Activated CD4-positive, alpha-beta T cell treated with anti-CD3 and anti-CD28 coated beads for 36 hours (primary cell): ENCODE measurements at regions of chr6 and their contacts with region 1.

Region 1: DNA sequence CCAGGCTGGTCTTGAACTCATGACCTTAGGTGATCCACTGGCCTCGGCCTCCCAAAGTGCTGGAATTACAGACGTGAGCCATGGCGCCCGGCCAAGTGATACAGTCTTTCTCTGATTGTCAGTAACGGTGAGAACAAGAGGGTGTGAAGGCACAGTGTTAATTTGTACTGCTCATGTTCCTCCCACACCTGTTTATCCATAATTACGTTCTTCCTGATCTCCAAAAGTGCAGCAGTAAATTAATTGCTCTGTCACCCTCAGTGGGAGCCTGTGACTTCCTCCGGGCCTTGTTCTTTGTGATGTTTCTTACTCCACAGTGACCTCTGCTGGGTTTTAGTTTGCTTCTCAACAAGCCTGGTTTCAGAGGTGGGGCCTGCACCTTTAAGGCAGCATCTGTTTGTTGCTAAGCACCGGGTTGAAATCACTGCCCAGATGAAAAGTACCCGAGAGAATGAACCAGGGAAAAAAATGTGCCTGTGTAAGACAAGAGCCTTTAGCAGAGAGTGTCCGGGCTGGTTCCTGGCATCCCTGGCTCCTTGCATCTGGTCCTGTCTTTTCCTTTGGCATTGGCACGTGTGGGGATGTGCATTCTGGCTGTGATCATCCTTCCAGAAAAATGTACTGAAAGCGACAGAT is 89.1 kb upstream of the CLDN20 start:
- DNase-seq: peak; percentile 77
- ATAC-seq: peak; percentile 58
- H3K4me3 Mint-ChIP-seq: no peak overlapping the region
- H3K27ac Mint-ChIP-seq: peak overlapping the region; percentile 73
- H3K4me1 Mint-ChIP-seq: peaks cover 50% of the 10 kb centered on the region
- H3K27me3 Mint-ChIP-seq: no peaks in the 10 kb centered on the region

Region 2: GRCh38 chr6:154606457-154606856 is 568.2 kb before region 1 on chr6:
- CTCF ChIA-PET with region 1: no interaction called
- POLR2A ChIA-PET with region 1: no interaction called
- intact Hi-C with region 1: loop called in 1 of 2 experiments (anchors 1 kb)
- DNase-seq: peak; percentile 96
- ATAC-seq: peak; percentile 92
- H3K4me3 Mint-ChIP-seq: peak overlapping the region; percentile 13
- H3K27ac Mint-ChIP-seq: peak overlapping the region; percentile 84
- H3K4me1 Mint-ChIP-seq: peaks cover 45% of the 10 kb centered on the region
- H3K27me3 Mint-ChIP-seq: peaks cover 4% of the 10 kb centered on the region

Region 3: GRCh38 chr6:154824076-154824475 is 350.6 kb before region 1 on chr6:
- CTCF ChIA-PET with region 1: no interaction called
- POLR2A ChIA-PET with region 1: no interaction called
- intact Hi-C with region 1: no loop called
- DNase-seq: no peak
- ATAC-seq: no peak
- H3K4me3 Mint-ChIP-seq: no peak overlapping the region
- H3K27ac Mint-ChIP-seq: peak overlapping the region; percentile 26
- H3K4me1 Mint-ChIP-seq: peaks cover 12% of the 10 kb centered on the region
- H3K27me3 Mint-ChIP-seq: no peaks in the 10 kb centered on the region

Region 4: DNA sequence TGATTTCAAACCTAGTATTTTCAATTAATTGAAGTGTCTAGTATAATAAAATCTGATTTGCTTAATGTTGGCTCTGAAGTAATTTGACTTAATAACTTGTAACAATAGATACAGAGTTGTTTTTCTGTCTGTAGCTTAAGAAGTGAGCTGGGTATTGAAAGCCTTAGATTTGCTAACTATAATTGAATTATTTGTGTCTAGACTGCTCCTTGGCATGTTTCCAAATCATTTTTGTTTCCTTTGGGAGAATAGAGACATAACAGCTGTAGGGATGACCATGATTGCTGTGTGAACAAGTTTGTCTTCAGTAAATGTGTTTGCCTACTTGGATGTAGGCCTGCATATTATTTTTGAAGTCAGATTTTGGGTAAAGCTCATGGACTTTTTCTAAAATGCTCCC is 326.1 kb before region 1 on chr6:
- CTCF ChIA-PET with region 1: no interaction called
- POLR2A ChIA-PET with region 1: no interaction called
- intact Hi-C with region 1: no loop called
- DNase-seq: no peak
- ATAC-seq: no peak
- H3K4me3 Mint-ChIP-seq: no peak overlapping the region
- H3K27ac Mint-ChIP-seq: no peak overlapping the region
- H3K4me1 Mint-ChIP-seq: peaks cover 11% of the 10 kb centered on the region
- H3K27me3 Mint-ChIP-seq: no peaks in the 10 kb centered on the region

Region 5: GRCh38 chr6:154928325-154928922 is 246.3 kb before region 1 on chr6:
- CTCF ChIA-PET with region 1: interaction called, 37 read pairs
- POLR2A ChIA-PET with region 1: interaction called, 3 read pairs
- intact Hi-C with region 1: loop called (anchors 1 kb)
- DNase-seq: peak; percentile 82
- ATAC-seq: peak; percentile 84
- H3K4me3 Mint-ChIP-seq: no peak overlapping the region
- H3K27ac Mint-ChIP-seq: no peak overlapping the region
- H3K4me1 Mint-ChIP-seq: peaks cover 14% of the 10 kb centered on the region
- H3K27me3 Mint-ChIP-seq: no peaks in the 10 kb centered on the region

Region 6: DNA sequence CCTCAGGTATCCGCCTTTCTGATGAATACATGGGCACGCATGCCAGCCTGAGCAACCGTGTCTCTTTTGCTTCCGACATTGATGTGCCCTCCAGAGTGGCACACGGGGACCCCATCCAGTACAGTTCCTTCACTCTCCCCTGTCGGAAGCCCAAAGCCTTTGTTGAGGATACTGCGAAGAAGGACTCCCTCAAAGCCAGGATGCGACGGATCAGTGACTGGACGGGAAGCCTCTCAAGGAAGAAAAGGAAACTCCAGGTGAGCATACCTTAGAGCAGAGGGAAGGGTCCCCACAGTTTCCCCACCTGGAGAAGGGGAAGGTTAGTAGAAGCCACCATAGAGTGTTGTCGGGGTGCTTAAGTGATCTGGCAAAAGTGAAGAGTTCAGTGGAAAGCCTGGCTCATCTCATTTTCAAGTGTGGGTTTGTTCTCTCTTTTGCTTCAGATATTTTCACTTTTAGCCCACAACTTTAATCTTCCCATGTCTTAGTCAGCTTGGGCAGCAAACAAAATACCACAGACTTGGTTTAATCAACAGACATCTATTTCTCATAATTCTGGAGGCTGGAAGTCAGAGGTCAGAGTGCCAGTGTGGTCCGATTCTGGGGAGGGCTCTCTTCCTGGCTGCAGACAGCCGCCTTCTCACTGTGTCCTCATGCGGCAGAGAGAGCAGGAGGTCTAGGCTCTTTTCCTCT is 44.4 kb before region 1 on chr6:
- CTCF ChIA-PET with region 1: interaction called, 3 read pairs
- POLR2A ChIA-PET with region 1: interaction called, 4 read pairs
- intact Hi-C with region 1: loop called in 1 of 2 experiments (anchors 1 kb)
- DNase-seq: peak; percentile 45
- ATAC-seq: peak; percentile 70
- H3K4me3 Mint-ChIP-seq: no peak overlapping the region
- H3K27ac Mint-ChIP-seq: peak overlapping the region; percentile 83
- H3K4me1 Mint-ChIP-seq: peaks cover 36% of the 10 kb centered on the region
- H3K27me3 Mint-ChIP-seq: no peaks in the 10 kb centered on the region

Region 7: DNA sequence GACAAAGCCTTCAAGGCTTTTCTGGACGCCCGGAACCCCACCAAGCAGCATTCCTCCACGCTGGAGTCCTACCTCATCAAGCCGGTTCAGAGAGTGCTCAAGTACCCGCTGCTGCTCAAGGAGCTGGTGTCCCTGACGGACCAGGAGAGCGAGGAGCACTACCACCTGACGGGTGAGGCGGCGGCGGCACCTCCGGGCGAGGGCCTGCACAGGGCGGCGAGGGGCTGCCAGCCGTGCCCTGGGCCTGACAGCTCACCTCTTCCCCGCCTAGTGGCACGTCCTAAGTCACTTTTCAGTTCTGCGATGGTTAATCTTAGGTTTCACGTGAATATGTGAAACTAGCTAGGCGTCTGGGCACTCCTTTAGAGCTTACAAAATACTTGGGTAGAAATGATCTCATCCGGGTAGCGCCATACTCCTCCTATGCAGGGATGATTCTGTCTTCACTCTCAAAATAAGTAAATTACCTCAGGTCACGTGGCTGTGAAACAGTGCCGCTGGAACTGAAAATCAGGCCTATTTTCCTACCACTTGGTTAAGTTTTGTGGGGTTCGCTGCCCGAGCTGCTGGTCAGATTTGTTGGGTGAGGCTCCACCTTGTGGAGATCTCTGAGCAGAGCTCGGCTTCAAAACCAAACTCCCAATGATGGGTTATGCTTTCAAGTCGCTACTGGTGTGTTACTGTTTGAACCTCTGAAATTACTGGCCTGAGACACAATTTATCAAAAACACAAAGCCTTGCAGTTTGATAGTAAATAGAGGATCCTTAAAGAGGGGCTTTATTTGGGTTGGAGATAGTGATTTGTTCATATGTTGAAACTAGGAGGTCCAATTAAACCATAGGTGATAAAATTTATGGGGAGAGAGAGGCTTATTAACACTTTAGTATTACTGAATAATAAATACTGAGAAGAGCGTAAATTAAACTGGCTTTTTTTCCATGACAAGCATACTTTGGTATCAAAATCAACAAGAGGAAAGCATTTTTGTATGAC is 73.6 kb after region 1 on chr6:
- CTCF ChIA-PET with region 1: interaction called, 42 read pairs
- POLR2A ChIA-PET with region 1: no interaction called
- intact Hi-C with region 1: loop called (anchors 1 kb)
- DNase-seq: peak; percentile 55
- ATAC-seq: peak; percentile 66
- H3K4me3 Mint-ChIP-seq: no peak overlapping the region
- H3K27ac Mint-ChIP-seq: peak overlapping the region; percentile 4
- H3K4me1 Mint-ChIP-seq: no peaks in the 10 kb centered on the region
- H3K27me3 Mint-ChIP-seq: no peaks in the 10 kb centered on the region

Region 8: GRCh38 chr6:155418017-155418761 is 243.5 kb after region 1 on chr6:
- CTCF ChIA-PET with region 1: no interaction called
- POLR2A ChIA-PET with region 1: interaction called, 3 read pairs
- intact Hi-C with region 1: loop called (anchors 1 kb)
- DNase-seq: peak; percentile 86
- ATAC-seq: peak; percentile 83
- H3K4me3 Mint-ChIP-seq: peak overlapping the region; percentile 65
- H3K27ac Mint-ChIP-seq: peak overlapping the region; percentile 98
- H3K4me1 Mint-ChIP-seq: peaks cover 48% of the 10 kb centered on the region
- H3K27me3 Mint-ChIP-seq: no peaks in the 10 kb centered on the region

Region 9: GRCh38 chr6:155787168-155787567 is 612.5 kb after region 1 on chr6:
- CTCF ChIA-PET with region 1: no interaction called
- POLR2A ChIA-PET with region 1: no interaction called
- intact Hi-C with region 1: no loop called
- DNase-seq: no peak
- ATAC-seq: no peak
- H3K4me3 Mint-ChIP-seq: no peak overlapping the region
- H3K27ac Mint-ChIP-seq: no peak overlapping the region
- H3K4me1 Mint-ChIP-seq: no peaks in the 10 kb centered on the region
- H3K27me3 Mint-ChIP-seq: no peaks in the 10 kb centered on the region